GM13977 (cell line): ENCODE measurements at regions of chr10 and their contacts with region 1.

Region 1: DNA sequence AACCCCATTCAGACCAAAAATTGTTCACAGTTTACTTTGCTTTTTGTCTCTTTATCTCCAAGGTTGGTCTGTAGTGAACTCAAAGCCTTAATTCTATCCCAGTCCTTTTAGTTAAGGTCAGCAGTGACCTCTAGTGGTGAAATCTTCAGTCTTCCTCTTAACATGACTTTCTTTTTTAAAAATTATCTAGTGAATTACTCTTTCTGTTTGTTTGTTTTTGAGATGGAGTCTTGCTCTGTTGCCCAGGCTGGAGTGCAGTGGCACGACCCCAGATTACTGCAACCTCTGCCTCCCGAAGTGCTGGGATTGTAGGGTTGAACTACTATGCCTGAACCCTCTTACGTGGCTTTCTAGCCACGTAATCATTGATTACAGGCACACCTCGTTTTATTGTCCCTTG is 25.0 kb downstream of the ZNF487 start:
- DNase-seq: peak; percentile 72
- CTCF ChIP-seq: peak; percentile 64

Region 2: GRCh38 chr10:43026011-43026973 is 435.7 kb before region 1 on chr10:
- in situ Hi-C with region 1: no loop called
- DNase-seq: no peak
- CTCF ChIP-seq: no peak

Region 3: DNA sequence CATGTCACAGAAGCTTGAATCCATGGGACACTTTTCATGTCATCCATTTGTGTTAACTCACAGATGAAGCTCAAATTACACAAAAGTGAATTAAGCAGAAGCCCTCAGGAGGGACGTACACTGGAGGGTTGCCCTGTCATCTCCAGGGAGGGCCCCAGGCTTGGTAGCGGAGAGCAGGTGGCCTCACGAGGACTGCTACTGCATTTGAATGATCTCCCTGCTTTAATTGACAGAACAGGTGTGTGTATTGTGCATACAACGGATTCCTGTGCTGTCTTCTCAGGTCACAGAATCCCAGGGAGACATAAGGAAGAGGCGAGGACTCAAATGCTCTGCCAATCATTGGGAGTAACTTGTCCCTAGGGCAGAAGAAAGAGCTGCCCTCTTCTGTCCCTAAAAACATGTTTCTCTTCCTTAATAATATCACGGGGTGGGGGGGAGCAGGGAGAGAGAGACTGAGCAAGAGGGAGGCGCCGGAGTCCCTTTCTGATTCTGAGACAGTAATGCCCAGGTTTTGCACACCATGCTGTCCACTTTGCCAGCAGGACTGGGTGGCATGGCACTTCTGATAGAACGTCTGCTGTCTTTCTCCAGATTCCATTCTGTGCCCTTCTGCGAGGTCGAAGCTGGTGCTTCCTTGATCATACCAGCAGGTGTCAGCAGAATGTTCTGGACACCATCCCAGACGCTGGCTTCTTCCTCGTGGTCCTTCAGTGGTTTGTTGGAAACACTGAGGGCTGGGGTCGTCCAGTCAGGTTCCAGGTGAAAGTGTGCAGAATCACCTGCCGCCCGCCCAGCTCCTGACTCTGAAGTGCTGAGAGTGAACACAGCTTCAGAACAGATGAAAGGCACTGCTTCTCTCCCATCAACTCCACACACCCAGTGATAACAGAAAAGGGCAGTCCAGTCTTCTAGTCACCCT is 168.9 kb before region 1 on chr10:
- in situ Hi-C with region 1: loop called (anchors 10 kb)
- DNase-seq: peak; percentile 68
- CTCF ChIP-seq: peak; percentile 79

Region 4: DNA sequence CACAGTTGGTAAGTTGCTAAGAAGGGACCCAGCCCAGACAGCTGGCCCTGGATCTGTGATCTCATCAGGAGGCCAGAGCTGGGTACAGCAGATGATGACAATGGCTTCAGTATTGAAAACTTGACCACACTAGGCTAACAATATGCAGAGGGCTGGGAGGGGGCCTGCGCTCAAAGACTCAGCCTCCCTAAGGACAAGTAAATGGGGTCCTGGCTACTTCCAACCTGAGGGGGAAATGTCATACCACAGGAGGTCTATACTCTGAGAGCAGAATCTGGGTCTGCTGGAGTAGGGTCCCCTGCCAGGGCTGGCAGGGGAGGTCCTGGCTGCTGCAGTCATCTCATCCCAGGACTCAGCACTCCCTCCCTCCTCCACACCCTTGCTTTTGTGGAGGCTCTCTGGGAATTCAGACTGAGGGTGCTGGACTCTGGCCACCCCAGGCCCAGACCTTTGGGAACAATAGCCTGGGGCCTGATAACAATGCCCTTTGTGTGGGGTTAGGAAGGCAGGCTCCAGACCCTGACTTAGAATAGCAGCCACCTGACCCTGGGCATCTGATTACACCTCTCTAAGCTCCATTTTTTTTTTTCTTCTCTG is 89.1 kb before region 1 on chr10:
- in situ Hi-C with region 1: no loop called
- DNase-seq: no peak
- CTCF ChIP-seq: no peak

Region 5: DNA sequence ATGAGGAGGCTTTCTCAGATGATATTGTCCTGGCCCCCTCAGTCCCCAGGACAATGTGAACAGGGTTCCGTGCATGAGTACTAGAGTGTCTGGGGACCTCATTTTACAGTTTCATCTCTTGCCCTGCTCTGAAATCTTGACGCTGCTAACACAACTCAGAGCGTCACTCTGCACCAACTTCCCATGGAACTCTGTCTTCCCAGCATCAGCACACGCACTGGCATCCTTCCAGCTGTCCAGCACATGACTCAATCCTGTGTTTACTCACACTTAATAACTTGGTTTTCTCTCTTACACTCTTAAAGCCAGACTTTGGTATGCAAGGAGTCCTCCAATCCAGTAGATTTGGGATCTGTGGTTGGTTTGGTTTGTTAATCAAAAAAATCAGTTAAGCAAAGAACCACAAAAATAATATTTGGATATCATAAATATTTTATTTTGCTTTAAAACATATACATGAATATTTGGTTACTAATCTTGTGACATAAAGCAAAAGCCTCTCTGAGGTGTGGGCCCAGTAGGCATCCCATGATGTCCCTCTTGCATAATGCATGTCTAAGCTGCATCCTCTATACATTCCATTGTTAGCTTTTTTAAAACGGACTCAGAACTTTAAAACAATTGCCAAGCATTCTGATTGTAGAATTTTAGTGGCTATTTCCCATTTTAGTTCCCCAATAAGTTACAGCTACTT is 792.0 kb after region 1 on chr10:
- in situ Hi-C with region 1: no loop called
- DNase-seq: no peak
- CTCF ChIP-seq: no peak